Activated CD8-positive, alpha-beta T cell treated with anti-CD3 and anti-CD28 coated beads, Interleukin-2, amount 10 ng/mL, durations not matched to agents 7 days and 5 days (primary cell): ENCODE measurements at regions of chr11 and their contacts with region 1.

Region 1: DNA sequence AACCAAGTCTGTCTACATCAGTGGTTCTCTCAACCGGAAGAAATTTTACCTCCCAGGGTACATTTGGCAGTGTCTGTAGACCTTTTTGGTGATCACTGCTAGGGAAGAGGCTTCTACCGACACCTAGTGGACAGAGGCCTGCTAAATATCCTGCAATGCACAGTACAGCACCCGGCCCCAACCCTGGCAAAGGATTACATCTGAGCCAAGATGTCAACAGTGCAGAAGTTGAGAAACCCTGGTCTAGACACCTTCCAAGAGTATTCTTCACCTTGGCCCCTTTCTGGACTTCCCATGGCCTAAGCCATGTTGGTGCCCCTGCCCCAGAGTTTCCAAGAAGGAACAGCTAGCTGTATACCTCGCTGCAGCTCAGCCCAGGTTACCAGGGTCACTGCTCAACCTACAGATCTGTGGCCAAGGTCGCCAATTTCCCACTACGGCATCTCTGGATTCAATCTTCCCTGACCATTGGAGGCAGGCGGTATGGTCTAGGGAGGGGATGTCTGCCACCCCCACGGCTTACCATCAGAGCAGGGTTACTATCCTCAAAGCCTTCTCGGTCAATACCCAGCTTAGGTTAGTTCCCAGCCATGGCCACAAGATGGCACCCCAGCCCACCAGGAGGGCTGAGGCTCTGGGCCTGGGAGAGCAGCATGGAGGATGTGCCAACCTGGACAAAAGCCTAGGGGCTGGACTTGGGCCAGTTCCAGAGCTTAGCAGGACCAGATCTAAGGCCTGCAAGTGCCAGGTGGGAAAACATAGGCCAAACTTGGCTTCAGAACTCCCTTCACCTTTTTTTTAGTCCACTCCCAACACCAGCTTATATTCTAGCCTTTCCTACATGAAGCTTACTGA is 3.7 kb upstream of the KCNC1 start:
- DNase-seq: peak; percentile 74
- ATAC-seq: peak; percentile 78
- H3K4me3 Mint-ChIP-seq: no peak overlapping the region
- H3K27ac Mint-ChIP-seq: no peak overlapping the region
- H3K4me1 Mint-ChIP-seq: peaks cover 3% of the 10 kb centered on the region
- H3K27me3 Mint-ChIP-seq: peaks cover 44% of the 10 kb centered on the region

Region 2: DNA sequence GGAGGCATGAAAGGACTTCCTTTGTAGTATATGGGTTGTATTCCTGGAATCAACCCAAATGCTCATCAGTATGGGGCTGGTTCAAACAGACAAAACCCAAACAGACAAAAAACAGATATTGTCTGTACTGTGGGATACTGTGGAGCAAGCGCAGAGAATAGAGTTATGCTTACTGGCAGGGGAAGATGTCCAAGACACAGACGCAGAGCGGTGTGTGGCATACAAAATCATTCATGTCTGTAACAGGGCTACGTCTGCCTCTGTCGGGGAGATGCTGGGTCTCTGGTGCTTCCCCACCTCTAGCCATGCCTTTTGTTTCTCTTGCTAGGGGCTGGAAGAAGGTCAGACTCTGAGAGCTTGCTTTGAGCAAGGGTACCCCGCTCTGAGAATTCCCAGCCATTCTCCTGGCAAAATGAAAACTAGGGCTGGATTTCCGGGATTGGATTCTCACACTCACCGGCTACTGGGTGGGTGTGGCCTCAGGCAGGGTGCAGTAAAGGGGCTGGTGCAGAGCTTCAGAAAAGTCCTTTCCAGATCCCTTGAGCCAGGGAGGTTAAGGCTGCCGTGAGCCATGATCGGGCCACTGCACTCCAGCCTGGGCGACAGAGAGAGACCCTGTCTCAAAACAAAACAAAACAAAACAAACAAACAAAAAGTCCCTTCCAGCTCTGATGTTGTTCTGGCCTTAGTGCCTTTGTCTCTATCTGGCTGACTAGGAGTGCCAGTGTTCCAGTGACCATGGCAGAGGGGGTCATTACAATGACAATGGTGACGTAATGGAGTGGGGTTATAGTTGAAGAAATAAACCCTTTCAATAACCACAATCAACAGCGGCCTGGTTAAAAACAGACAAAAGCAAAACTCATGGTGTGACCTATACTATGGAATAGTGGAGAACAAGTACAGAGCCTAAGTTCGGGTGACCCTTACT is 251.3 kb before region 1 on chr11:
- CTCF ChIA-PET with region 1: no interaction called
- POLR2A ChIA-PET with region 1: no interaction called
- DNase-seq: no peak
- ATAC-seq: no peak
- H3K4me3 Mint-ChIP-seq: no peak overlapping the region
- H3K27ac Mint-ChIP-seq: no peak overlapping the region
- H3K4me1 Mint-ChIP-seq: peaks cover 14% of the 10 kb centered on the region
- H3K27me3 Mint-ChIP-seq: peaks cover 60% of the 10 kb centered on the region

Region 3: GRCh38 chr11:17598700-17599459 is 132.0 kb before region 1 on chr11:
- CTCF ChIA-PET with region 1: interaction called, 12 read pairs
- POLR2A ChIA-PET with region 1: no interaction called
- DNase-seq: peak; percentile 82
- ATAC-seq: peak; percentile 91
- H3K4me3 Mint-ChIP-seq: no peak overlapping the region
- H3K27ac Mint-ChIP-seq: no peak overlapping the region
- H3K4me1 Mint-ChIP-seq: no peaks in the 10 kb centered on the region
- H3K27me3 Mint-ChIP-seq: peaks cover 5% of the 10 kb centered on the region

Region 4: DNA sequence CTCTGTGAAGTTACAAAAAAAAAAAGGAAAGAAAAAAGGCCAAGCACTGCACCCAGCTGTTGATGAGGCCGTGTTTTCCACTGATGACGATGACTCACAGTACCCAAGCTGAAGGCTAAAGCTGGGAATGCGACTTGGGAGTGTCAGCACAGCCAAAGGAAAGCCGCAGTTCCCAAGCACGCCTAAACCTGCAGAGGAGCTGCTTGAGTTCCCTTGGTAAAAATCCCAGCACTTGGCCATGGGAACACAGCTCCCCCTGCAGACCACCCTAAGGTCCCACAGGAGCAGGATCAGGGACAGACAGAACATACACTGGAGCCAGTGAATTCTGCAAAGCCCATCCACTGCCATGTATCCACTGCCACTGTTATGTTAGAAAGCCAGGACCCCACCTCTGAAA is 242.2 kb after region 1 on chr11:
- CTCF ChIA-PET with region 1: interaction called, 141 read pairs
- POLR2A ChIA-PET with region 1: no interaction called
- DNase-seq: no peak
- ATAC-seq: no peak
- H3K4me3 Mint-ChIP-seq: no peak overlapping the region
- H3K27ac Mint-ChIP-seq: no peak overlapping the region
- H3K4me1 Mint-ChIP-seq: no peaks in the 10 kb centered on the region
- H3K27me3 Mint-ChIP-seq: no peaks in the 10 kb centered on the region

Region 5: DNA sequence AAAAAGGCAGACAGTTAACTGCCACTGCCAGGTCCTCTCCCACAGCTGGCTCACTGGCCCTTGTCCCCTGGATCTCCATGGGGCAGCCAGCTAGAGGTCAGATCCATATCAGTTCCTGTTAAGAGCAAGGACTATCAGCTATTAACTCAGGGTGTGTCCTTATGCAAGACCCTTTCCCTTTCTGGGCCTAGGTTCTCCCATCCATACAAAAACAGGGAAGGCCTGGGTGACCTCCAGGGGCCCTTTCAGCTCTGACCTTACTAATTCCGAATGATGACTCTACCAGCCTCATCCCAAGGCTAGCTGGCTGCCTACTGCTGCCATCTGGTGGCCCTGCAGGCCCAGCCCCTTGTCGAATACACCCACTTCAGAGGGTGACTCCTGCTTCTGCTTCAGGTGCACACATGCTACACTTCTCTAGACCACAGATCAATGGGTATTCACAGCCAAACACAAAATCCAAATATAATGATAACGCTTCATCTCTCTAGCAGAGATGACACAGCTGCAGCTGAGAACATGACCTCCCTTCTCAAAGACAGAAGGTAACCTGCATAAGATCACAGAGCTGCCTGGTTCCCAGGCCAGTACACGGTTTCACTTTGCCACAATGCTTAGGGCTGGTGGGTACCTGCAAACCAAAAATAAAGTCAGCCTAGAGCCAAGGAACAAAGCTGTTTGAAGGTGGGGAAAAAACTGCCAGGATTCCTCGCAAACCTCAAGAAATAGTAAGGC is 247.9 kb after region 1 on chr11:
- CTCF ChIA-PET with region 1: interaction called, 141 read pairs
- POLR2A ChIA-PET with region 1: interaction called, 4 read pairs
- DNase-seq: peak; percentile 34
- ATAC-seq: peak; percentile 42
- H3K4me3 Mint-ChIP-seq: no peak overlapping the region
- H3K27ac Mint-ChIP-seq: no peak overlapping the region
- H3K4me1 Mint-ChIP-seq: no peaks in the 10 kb centered on the region
- H3K27me3 Mint-ChIP-seq: no peaks in the 10 kb centered on the region

Region 6: GRCh38 chr11:17986007-17986710 is 255.3 kb after region 1 on chr11:
- CTCF ChIA-PET with region 1: interaction called, 141 read pairs
- POLR2A ChIA-PET with region 1: no interaction called
- DNase-seq: no peak
- ATAC-seq: no peak
- H3K4me3 Mint-ChIP-seq: no peak overlapping the region
- H3K27ac Mint-ChIP-seq: no peak overlapping the region
- H3K4me1 Mint-ChIP-seq: no peaks in the 10 kb centered on the region
- H3K27me3 Mint-ChIP-seq: no peaks in the 10 kb centered on the region